ENCODE measurements at regions of chr13 and their contacts with region 1.

Region 1: GRCh38 chr13:50123862-50124536 is 108.8 kb downstream of the KCNRG start:
- DNase-seq: no peak
- ATAC-seq: peak; percentile 77
- H3K4me3 Mint-ChIP-seq: peak overlapping the region; percentile 91
- H3K27ac Mint-ChIP-seq: peak overlapping the region; percentile 83
- H3K4me1 Mint-ChIP-seq: peaks cover 32% of the 10 kb centered on the region
- H3K27me3 Mint-ChIP-seq: peaks cover 13% of the 10 kb centered on the region

Region 2: DNA sequence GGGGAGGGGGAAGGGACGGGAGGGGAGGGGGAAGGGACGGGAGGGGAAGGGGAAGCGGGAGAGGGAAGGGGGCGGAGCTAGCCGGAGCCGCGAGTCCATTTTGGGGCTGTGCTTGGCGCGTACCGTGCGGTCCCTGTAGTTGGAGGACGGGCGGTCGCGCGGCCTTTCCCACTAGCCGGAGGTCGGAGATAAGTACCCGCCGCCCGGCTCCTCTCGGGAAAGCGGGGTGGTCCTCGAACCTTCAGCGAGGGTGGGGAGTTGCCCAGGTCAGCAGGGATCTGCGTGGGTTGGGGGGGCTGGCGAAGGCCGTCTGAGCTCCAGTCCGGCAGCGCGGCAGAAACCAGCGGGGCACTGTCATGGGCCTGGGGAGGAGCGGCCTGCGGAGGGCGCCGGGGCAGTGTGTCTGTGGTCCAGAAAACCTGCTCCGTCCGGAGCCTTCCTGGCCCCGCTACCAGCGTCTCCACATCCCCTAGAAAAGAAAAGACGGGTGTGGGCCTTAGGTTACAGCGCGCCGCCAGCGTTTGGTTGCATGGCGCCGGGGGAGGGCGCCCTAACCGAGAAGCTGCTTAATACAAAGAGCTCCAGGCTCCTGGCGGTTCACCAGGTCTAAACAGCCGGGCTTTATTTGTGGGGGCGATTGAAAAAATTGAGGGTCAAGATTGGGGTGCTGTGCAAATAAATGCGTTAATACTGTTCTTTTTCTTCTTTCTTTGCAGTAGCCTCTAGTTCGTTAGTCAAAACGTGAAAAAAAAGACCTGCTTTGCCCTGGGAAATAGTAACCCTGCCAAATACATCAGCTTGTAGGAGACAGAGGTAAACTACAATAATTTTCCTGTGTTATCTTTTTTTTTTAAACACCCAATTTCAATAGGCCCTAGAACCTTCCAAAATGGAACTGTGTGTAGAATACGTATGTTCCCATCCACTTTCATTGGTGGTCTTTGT is 126.8 kb before region 1 on chr13 and contains the start of gene TRIM13:
- POLR2A ChIA-PET with region 1: interaction called, 52 read pairs
- DNase-seq: peak; percentile 86
- ATAC-seq: peak; percentile 87
- H3K4me3 Mint-ChIP-seq: peak within 1 kb of the TSS; percentile 94
- H3K27ac Mint-ChIP-seq: peak within 1 kb of the TSS; percentile 89
- H3K4me1 Mint-ChIP-seq: peaks cover 22% of the 10 kb centered on the region
- H3K27me3 Mint-ChIP-seq: no peaks in the 10 kb centered on the region
- total RNA-seq, gene TRIM13: 19.7 to 19.9 TPM

Region 3: DNA sequence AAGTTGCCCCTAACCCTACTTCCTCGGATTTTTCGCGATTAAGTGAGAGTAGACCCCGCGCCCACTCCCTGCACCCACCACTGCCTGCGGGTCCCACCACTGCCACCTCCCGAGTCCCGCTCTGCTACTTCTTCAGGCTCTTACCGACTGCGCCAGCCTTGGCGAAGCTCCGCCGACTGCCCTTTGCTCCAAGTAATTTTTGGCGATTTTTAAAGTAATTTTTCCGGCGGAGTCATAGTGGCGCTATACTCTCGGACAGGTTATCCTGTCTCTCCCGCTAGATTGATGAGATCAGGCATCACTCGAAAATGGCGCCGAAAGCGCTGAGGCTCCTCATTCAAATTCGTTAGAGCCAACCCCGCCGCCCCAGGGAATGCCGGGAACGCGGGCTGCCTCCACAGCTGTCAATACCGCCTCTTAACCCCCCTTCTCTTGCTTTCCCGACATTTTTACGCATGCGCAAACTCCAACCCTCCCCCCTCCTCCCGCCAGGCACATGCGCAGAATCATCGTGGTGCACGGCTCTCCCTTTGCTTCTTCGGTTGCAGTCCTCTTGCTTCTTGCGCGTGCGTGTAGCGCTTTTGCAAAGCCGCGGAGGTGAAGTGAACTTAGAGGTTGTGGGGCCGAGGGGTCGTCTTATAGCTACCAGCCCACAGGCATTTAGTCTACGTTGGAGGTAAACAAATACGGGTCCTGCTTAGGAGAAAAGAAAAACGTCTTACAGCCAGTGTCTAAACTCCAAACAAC is 42.1 kb before region 1 on chr13:
- POLR2A ChIA-PET with region 1: interaction called, 224 read pairs
- DNase-seq: peak; percentile 95
- ATAC-seq: peak; percentile 80
- H3K4me3 Mint-ChIP-seq: peak overlapping the region; percentile 100
- H3K27ac Mint-ChIP-seq: peak overlapping the region; percentile 100
- H3K4me1 Mint-ChIP-seq: peaks cover 31% of the 10 kb centered on the region
- H3K27me3 Mint-ChIP-seq: no peaks in the 10 kb centered on the region

Region 4: GRCh38 chr13:50106559-50106958 is 17.4 kb before region 1 on chr13:
- POLR2A ChIA-PET with region 1: interaction called, 12 read pairs
- DNase-seq: no peak
- ATAC-seq: no peak
- H3K4me3 Mint-ChIP-seq: peak overlapping the region; percentile 56
- H3K27ac Mint-ChIP-seq: peak overlapping the region; percentile 84
- H3K4me1 Mint-ChIP-seq: peaks cover 13% of the 10 kb centered on the region
- H3K27me3 Mint-ChIP-seq: no peaks in the 10 kb centered on the region

Region 5: DNA sequence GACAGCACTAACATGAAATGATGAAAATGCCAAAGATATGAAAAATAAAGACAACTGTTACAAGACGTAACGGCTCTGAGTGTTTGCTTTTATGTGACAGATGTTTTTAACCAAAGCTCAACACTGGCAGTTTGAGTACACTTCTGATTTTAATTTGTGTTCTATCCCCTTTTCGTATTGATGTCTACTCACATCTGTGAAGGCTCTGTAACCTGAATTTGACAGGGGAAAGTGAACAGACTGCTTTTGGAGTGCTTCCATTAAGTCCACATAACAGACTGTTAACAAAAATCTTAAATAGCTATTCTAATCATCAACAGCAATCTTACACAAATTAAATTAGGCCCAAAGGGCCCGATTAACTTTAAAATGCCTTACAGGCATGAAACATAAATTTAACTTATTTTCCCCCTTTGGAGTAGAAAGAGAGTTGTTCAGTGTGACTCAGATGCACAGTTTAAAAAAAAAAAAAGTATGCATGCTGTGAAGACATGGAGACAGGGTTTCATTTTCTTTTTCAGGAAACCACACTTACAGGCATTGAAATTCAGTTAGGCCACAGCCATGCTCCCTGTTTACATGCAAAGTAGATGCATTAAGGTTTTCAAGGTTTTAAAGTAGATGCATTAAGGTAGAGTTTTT is 769.3 kb after region 1 on chr13:
- POLR2A ChIA-PET with region 1: interaction called, 17 read pairs
- DNase-seq: no peak
- ATAC-seq: peak; percentile 95
- H3K4me3 Mint-ChIP-seq: peak overlapping the region; percentile 75
- H3K27ac Mint-ChIP-seq: peak overlapping the region; percentile 93
- H3K4me1 Mint-ChIP-seq: peaks cover 37% of the 10 kb centered on the region
- H3K27me3 Mint-ChIP-seq: no peaks in the 10 kb centered on the region